Heart left ventricle (tissue), 16 donors: ENCODE measurements at regions of chr16 and their contacts with region 1.

Region 1: GRCh38 chr16:1533443-1533951 is at the start of gene TMEM204:
- DNase-seq: peak; percentile 87 to 91 (median 90)
- ATAC-seq: peak; percentile 52 to 76 (median 62)
- H3K4me3 ChIP-seq: peak within 1 kb of the TSS; percentile 66 to 93 (median 87)
- H3K27ac ChIP-seq: peak within 1 kb of the TSS; percentile 92 to 99 (median 96)
- H3K4me1 ChIP-seq: peaks cover 8 to 83% (median 66%) of the 10 kb centered on the region in 12 donors
- H3K27me3 ChIP-seq: peaks cover 0 to 17% (median 0%) of the 10 kb centered on the region in 9 donors
- CTCF ChIP-seq: no peak
- POLR2A ChIP-seq: peak in 1 of 2 donors; percentile 93
- total RNA-seq, gene TMEM204: 14.0 to 64.2 (median 19.5) TPM

Region 2: GRCh38 chr16:1398826-1399601 is 134.5 kb before region 1 on chr16:
- intact Hi-C with region 1: no loop called
- DNase-seq: no peak
- ATAC-seq: peak in 1 of 4 donors; percentile 21
- H3K4me3 ChIP-seq: no peak overlapping the region
- H3K27ac ChIP-seq: no peak overlapping the region
- H3K4me1 ChIP-seq: no peaks in the 10 kb centered on the region
- H3K27me3 ChIP-seq: no peaks in the 10 kb centered on the region
- CTCF ChIP-seq: no peak
- POLR2A ChIP-seq: no peak

Region 3: GRCh38 chr16:1511662-1512575 is 21.6 kb before region 1 on chr16:
- intact Hi-C with region 1: loop called in 1 of 10 experiments (anchors 2 kb)
- DNase-seq: no peak
- ATAC-seq: no peak
- H3K4me3 ChIP-seq: no peak overlapping the region
- H3K27ac ChIP-seq: peak overlapping the region in 4 of 12 donors; percentile 9 to 95 (median 24)
- H3K4me1 ChIP-seq: peaks cover 6 to 44% (median 24%) of the 10 kb centered on the region in 12 donors
- H3K27me3 ChIP-seq: no peaks in the 10 kb centered on the region
- CTCF ChIP-seq: no peak
- POLR2A ChIP-seq: no peak